Natural killer cell (primary cell): ENCODE measurements at regions of chr18 and their contacts with region 1.

Region 1: DNA sequence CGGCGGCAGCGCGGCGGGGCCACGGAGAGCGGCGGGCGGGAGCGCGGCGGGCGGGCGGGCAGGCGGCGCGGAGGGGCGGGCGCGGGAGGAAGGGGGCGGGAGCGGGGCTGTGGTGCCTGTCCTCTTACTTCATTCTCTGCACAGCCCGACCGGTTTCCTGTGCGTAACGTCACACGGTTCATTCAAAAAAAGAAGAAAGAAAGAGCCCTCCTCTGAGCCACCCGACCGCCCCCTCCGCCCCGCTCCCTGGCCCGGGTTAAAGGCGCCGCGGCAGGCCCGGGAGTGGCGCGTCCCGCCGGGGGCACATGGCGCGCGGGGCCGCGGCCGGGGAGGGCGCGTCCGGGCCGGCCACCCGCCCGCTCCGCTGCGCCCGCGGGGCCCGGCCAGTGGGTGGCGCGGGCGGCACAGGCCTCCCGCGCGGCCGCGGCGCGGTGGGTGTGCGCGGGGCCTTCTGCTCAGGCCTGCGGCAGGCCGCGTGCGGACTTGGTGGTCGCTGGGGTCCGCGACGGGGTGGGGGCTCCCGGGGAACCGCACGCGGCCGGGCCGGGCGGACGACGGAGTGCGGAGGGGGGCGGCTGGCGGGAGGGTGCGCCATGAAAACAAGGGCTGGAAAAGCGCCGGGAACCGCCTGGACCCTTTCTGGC is 599 bp upstream of the BCL2 start:
- DNase-seq: peak; percentile 79 to 94
- ATAC-seq: peak; percentile 78 to 91 (median 85)
- H3K4me3 ChIP-seq: peak overlapping the region; percentile 35
- H3K4me3 Mint-ChIP-seq: peak overlapping the region; percentile 88
- H3K27ac ChIP-seq: peak overlapping the region; percentile 14
- H3K27ac Mint-ChIP-seq: peak overlapping the region; percentile 93 to 94
- H3K4me1 ChIP-seq: peaks cover 22% of the 10 kb centered on the region
- H3K4me1 Mint-ChIP-seq: peaks cover 53 to 57% of the 10 kb centered on the region in 2 donors
- H3K27me3 ChIP-seq: no peaks in the 10 kb centered on the region
- H3K27me3 Mint-ChIP-seq: no peaks in the 10 kb centered on the region
- CTCF ChIP-seq: no peak

Region 2: DNA sequence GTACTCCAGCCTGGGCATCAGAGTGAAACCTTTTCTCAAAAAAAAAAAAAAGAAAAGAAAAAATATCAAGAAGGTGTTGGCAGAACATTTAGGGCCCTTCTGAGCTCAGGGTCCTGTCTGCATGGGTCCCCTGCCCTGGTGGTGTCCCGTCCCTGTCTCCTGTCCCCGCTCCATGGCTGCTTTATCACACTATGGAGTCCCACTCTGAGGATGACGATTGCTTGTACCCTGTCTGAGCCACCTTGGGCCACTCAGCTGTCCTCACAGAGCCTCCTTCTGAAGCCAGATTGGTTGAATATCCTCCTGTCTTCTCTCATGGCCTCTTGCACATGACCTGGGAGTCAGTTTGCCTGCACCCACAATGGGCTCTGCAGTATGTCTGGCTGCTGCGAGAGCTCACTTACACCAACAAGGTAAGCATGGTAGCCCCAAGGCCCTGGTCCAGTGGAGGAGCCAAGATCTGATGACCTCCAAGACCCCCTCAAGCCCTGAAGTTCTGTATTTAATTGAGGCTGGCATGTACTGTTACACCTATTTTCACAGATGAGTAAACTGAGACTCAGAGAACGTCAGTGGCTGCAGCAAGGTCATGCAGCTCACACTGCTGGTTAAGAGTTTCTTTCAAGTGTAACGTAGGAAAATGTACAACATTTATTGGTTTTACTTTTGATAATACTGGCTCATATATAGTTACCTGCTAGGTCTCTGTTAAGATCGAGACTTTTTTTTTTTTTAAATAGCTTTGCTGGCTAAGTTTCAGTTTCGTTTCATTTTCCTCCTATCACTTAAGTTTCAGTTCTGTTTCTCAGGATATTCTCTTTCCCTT is 814.3 kb before region 1 on chr18:
- intact Hi-C with region 1: no loop called
- DNase-seq: peak in 1 of 2 donors; percentile 69
- ATAC-seq: peak; percentile 70 to 82 (median 79)
- H3K4me3 ChIP-seq: peak overlapping the region; percentile 36
- H3K4me3 Mint-ChIP-seq: peak overlapping the region; percentile 92
- H3K27ac ChIP-seq: peak overlapping the region; percentile 76
- H3K27ac Mint-ChIP-seq: peak overlapping the region; percentile 88 to 93
- H3K4me1 ChIP-seq: peaks cover 14% of the 10 kb centered on the region
- H3K4me1 Mint-ChIP-seq: peaks cover 11 to 13% of the 10 kb centered on the region in 2 donors
- H3K27me3 ChIP-seq: no peaks in the 10 kb centered on the region
- H3K27me3 Mint-ChIP-seq: no peaks in the 10 kb centered on the region
- CTCF ChIP-seq: no peak

Region 3: GRCh38 chr18:63131106-63131958 is 188.8 kb before region 1 on chr18:
- intact Hi-C with region 1: loop called (anchors 1 kb)
- DNase-seq: peak; percentile 33 to 81
- ATAC-seq: peak; percentile 62 to 90 (median 71)
- H3K4me3 ChIP-seq: no peak overlapping the region
- H3K4me3 Mint-ChIP-seq: no peak overlapping the region
- H3K27ac ChIP-seq: peak overlapping the region; percentile 4
- H3K27ac Mint-ChIP-seq: peak overlapping the region in 1 of 2 donors; percentile 60
- H3K4me1 ChIP-seq: peaks cover 6% of the 10 kb centered on the region
- H3K4me1 Mint-ChIP-seq: peaks cover 18 to 32% of the 10 kb centered on the region in 2 donors
- H3K27me3 ChIP-seq: no peaks in the 10 kb centered on the region
- H3K27me3 Mint-ChIP-seq: no peaks in the 10 kb centered on the region
- CTCF ChIP-seq: peak; percentile 79

Region 4: DNA sequence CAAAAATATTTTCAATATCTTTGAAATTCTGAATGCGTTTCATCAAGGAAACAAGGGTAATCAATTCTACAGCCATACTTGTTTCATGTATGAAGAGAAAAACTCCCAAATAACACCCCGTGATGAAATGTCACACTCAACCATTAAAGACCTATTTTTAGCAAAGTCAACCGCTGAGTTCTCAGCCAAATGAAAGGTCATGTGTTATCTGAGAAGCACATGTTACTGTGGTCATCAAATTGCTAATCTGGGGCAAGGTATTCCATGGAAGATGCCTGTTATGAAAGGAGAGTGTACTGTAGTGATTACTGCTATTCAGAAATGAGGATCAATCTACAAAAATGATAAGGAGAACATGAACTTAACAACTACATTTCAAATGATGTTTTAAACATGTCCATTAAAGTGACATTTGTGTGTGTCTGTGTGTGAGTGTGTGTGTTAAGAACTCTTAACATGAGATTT is 127.3 kb before region 1 on chr18:
- intact Hi-C with region 1: loop called (anchors 2 kb)
- DNase-seq: peak in 1 of 2 donors; percentile 41
- ATAC-seq: peak; percentile 75 to 87 (median 80)
- H3K4me3 ChIP-seq: no peak overlapping the region
- H3K4me3 Mint-ChIP-seq: peak overlapping the region; percentile 26
- H3K27ac ChIP-seq: peak overlapping the region; percentile 41
- H3K27ac Mint-ChIP-seq: peak overlapping the region; percentile 82 to 90
- H3K4me1 ChIP-seq: peaks cover 16% of the 10 kb centered on the region
- H3K4me1 Mint-ChIP-seq: peaks cover 19% of the 10 kb centered on the region in 2 donors
- H3K27me3 ChIP-seq: no peaks in the 10 kb centered on the region
- H3K27me3 Mint-ChIP-seq: no peaks in the 10 kb centered on the region
- CTCF ChIP-seq: no peak

Region 5: DNA sequence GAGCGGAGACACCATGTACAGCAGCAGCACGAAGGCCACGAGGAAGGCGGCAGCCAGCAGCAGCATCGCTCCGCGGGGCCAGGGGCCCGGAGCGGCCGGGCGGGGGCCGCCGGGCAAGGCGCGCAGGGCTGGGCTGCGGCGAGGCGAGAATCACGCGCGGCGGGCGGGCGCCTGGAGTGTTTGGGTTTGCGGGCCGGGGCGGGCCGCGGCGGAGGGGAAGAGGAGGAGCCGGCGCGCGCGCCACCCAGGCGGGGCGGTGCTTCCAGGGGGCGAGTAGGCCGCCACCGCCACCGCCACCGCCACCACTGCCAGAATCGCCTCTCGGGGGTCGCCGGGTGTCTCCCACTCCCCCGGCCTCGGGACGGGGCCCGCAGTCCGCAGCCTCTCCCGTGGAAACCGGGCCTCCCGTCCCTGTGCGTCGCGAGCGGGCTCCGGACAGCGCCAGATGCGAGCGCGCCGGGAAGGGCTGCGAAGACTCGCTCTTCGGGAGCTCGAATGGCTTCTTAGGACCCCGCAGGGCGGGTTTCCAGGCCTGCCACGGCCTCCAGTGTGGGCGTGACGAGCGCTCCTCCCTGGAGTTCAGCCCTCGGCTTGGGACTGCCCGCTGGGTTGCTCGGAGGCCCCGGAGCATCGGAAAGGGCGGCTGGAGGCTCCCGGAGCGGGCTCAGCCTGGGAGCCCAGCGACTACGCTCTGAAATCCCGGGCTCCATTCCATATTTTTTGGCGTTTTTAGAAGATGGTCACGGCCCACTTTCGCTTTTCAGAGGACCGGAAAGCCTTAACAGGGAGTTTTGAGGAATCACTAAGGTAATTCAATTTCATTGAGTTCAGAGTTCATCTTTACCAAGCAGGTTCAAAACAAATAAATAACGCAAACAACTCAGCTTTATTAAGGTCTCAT is 47.1 kb after region 1 on chr18 and contains the start of gene KDSR:
- intact Hi-C with region 1: loop called (anchors 2 kb)
- DNase-seq: peak; percentile 79 to 86
- ATAC-seq: peak; percentile 83 to 91 (median 87)
- H3K4me3 ChIP-seq: peak within 1 kb of the TSS; percentile 93
- H3K4me3 Mint-ChIP-seq: peak within 1 kb of the TSS; percentile 91
- H3K27ac ChIP-seq: peak within 1 kb of the TSS; percentile 78
- H3K27ac Mint-ChIP-seq: peak within 1 kb of the TSS; percentile 50 to 69
- H3K4me1 ChIP-seq: peaks cover 30% of the 10 kb centered on the region
- H3K4me1 Mint-ChIP-seq: peaks cover 46 to 48% of the 10 kb centered on the region in 2 donors
- H3K27me3 ChIP-seq: no peaks in the 10 kb centered on the region
- H3K27me3 Mint-ChIP-seq: peaks cover 7 to 14% of the 10 kb centered on the region in 2 donors
- CTCF ChIP-seq: no peak
- total RNA-seq, gene KDSR: 11.1 to 15.1 (median 11.6) TPM

Region 6: GRCh38 chr18:63439334-63439733 is 119.2 kb after region 1 on chr18:
- intact Hi-C with region 1: loop called (anchors 1 kb)
- DNase-seq: peak in 1 of 2 donors; percentile 80
- ATAC-seq: peak; percentile 69 to 82 (median 78)
- H3K4me3 ChIP-seq: no peak overlapping the region
- H3K4me3 Mint-ChIP-seq: no peak overlapping the region
- H3K27ac ChIP-seq: no peak overlapping the region
- H3K27ac Mint-ChIP-seq: no peak overlapping the region
- H3K4me1 ChIP-seq: no peaks in the 10 kb centered on the region
- H3K4me1 Mint-ChIP-seq: no peaks in the 10 kb centered on the region
- H3K27me3 ChIP-seq: no peaks in the 10 kb centered on the region
- H3K27me3 Mint-ChIP-seq: peaks cover 12 to 13% of the 10 kb centered on the region in 2 donors
- CTCF ChIP-seq: peak; percentile 95

Region 7: GRCh38 chr18:64127172-64127571 is 807.0 kb after region 1 on chr18:
- intact Hi-C with region 1: no loop called
- DNase-seq: no peak
- ATAC-seq: no peak
- H3K4me3 ChIP-seq: no peak overlapping the region
- H3K4me3 Mint-ChIP-seq: no peak overlapping the region
- H3K27ac ChIP-seq: no peak overlapping the region
- H3K27ac Mint-ChIP-seq: no peak overlapping the region
- H3K4me1 ChIP-seq: no peaks in the 10 kb centered on the region
- H3K4me1 Mint-ChIP-seq: no peaks in the 10 kb centered on the region
- H3K27me3 ChIP-seq: no peaks in the 10 kb centered on the region
- H3K27me3 Mint-ChIP-seq: no peaks in the 10 kb centered on the region
- CTCF ChIP-seq: no peak